Transverse colon (tissue), 4 donors: ENCODE measurements at regions of chr16 and their contacts with region 1.

Region 1: GRCh38 chr16:87324411-87325275 is 7.5 kb upstream of the C16orf95 start:
- DNase-seq: peak; percentile 30
- H3K4me3 ChIP-seq: no peak overlapping the region
- H3K27ac ChIP-seq: peak overlapping the region in 1 of 4 donors; percentile 10
- H3K4me1 ChIP-seq: peaks cover 0 to 6% (median 3%) of the 10 kb centered on the region in 4 donors
- H3K27me3 ChIP-seq: no peaks in the 10 kb centered on the region
- CTCF ChIP-seq: peak; percentile 68 to 82 (median 80)
- EP300 ChIP-seq: no peak
- POLR2A ChIP-seq: no peak

Region 2: GRCh38 chr16:87375426-87376135 is 50.9 kb after region 1 on chr16:
- in situ Hi-C with region 1: loop called in 1 of 4 experiments (anchors 5 kb)
- intact Hi-C with region 1: loop called (anchors 10 kb)
- DNase-seq: no peak
- H3K4me3 ChIP-seq: no peak overlapping the region
- H3K27ac ChIP-seq: peak overlapping the region; percentile 13 to 42 (median 23)
- H3K4me1 ChIP-seq: peaks cover 21 to 70% (median 39%) of the 10 kb centered on the region in 4 donors
- H3K27me3 ChIP-seq: no peaks in the 10 kb centered on the region
- CTCF ChIP-seq: no peak
- EP300 ChIP-seq: no peak
- POLR2A ChIP-seq: no peak